Colonic mucosa (tissue), 4 donors: ENCODE measurements at regions of chr7 and their contacts with region 1.

Region 1: DNA sequence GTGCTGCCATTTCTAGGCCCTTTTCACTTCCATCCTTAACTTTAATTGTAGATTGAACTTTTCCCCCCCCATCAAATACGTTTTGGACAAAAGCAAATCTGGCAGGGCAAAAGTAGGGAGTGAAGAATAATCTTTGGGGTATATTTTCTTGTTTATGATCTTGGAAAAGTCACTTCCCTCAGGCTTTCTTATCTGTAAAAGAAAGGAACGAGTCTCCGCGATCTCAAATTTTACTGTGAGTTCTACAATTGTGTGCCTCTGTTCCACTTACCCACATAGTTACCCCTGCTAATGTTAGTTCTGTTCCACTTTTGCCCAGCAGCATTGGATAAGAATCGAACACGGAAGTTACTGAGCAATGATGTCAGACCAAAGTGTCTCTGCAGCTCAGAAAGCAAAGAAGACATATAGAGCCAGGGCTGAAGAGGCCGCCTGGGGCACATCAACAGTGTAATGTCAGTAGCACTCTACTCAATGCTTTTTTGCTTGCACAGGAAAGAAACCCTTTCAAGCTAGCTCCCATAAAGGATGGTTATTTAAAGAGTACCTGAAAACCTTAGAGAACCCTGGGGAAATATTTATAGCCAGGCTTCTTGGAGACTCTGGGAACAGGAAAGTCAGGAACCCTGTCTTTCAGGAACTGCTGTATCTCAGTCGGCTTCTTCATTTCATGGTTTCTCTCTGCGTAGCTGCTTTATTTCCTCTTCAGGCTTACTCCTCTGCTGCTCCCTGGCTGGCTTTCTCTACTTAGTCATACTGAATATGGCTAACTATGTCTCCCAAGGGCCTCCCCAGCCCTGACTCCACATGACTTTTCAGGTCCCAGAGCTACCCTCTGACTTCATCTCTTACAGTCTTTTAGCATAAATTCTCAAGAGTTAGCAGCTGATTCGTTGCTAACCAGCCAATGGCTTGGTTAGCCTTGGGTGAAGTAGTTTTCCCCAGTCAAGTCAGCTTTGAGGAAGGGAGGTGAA is 123.7 kb upstream of the FAM3C start:
- DNase-seq: no peak
- H3K4me3 ChIP-seq: no peak overlapping the region
- H3K27ac ChIP-seq: no peak overlapping the region
- H3K4me1 ChIP-seq: no peaks in the 10 kb centered on the region
- H3K27me3 ChIP-seq: no peaks in the 10 kb centered on the region
- CTCF ChIP-seq: no peak

Region 2: GRCh38 chr7:121313793-121314676 is 205.8 kb before region 1 on chr7:
- intact Hi-C with region 1: no loop called
- DNase-seq: peak; percentile 32
- H3K4me3 ChIP-seq: no peak overlapping the region
- H3K27ac ChIP-seq: peak overlapping the region; percentile 30
- H3K4me1 ChIP-seq: peaks cover 5% of the 10 kb centered on the region
- H3K27me3 ChIP-seq: no peaks in the 10 kb centered on the region
- CTCF ChIP-seq: no peak

Region 3: DNA sequence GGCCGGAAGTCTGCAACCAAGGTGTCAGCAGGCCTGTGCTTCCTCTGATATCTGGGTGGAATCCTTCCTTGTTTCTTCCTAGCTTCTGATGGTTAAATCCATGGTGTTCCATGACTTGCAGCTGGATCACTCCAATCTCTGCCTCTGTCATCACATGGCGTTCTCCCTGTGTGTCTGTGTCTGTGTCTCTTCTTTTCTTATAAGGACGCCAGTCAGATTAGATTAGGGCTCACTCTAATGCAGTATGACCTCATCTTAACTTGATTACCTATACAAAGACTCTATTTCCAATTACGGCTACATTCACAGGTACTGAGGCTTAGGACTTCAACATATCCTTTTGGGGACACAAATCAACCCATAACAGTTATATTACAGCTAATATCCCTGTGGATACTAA is 53.4 kb before region 1 on chr7:
- intact Hi-C with region 1: loop called (anchors 10 kb)
- DNase-seq: no peak
- H3K4me3 ChIP-seq: no peak overlapping the region
- H3K27ac ChIP-seq: no peak overlapping the region
- H3K4me1 ChIP-seq: no peaks in the 10 kb centered on the region
- H3K27me3 ChIP-seq: no peaks in the 10 kb centered on the region
- CTCF ChIP-seq: no peak